ENCODE measurements at regions of chr11 and their contacts with region 1.

Region 1: GRCh38 chr11:44565211-44565952 is at the start of gene CD82:
- DNase-seq: peak; percentile 99
- H3K4me3 Mint-ChIP-seq: peak within 1 kb of the TSS; percentile 83
- H3K27ac Mint-ChIP-seq: peak within 1 kb of the TSS; percentile 93
- H3K4me1 Mint-ChIP-seq: peaks cover 51% of the 10 kb centered on the region
- H3K27me3 Mint-ChIP-seq: no peaks in the 10 kb centered on the region
- total RNA-seq, gene CD82: 140 to 141 TPM

Region 2: GRCh38 chr11:43341159-43341558 is 1224.2 kb before region 1 on chr11:
- CTCF ChIA-PET with region 1: no interaction called
- intact Hi-C with region 1: no loop called
- DNase-seq: no peak
- H3K4me3 Mint-ChIP-seq: no peak overlapping the region
- H3K27ac Mint-ChIP-seq: no peak overlapping the region
- H3K4me1 Mint-ChIP-seq: no peaks in the 10 kb centered on the region
- H3K27me3 Mint-ChIP-seq: no peaks in the 10 kb centered on the region

Region 3: GRCh38 chr11:44256673-44257291 is 308.6 kb before region 1 on chr11:
- CTCF ChIA-PET with region 1: no interaction called
- intact Hi-C with region 1: no loop called
- DNase-seq: no peak
- H3K4me3 Mint-ChIP-seq: no peak overlapping the region
- H3K27ac Mint-ChIP-seq: no peak overlapping the region
- H3K4me1 Mint-ChIP-seq: peaks cover 3% of the 10 kb centered on the region
- H3K27me3 Mint-ChIP-seq: no peaks in the 10 kb centered on the region

Region 4: GRCh38 chr11:44505581-44506054 is 59.8 kb before region 1 on chr11:
- CTCF ChIA-PET with region 1: no interaction called
- intact Hi-C with region 1: no loop called
- DNase-seq: no peak
- H3K4me3 Mint-ChIP-seq: no peak overlapping the region
- H3K27ac Mint-ChIP-seq: no peak overlapping the region
- H3K4me1 Mint-ChIP-seq: no peaks in the 10 kb centered on the region
- H3K27me3 Mint-ChIP-seq: peaks cover 3% of the 10 kb centered on the region

Region 5: DNA sequence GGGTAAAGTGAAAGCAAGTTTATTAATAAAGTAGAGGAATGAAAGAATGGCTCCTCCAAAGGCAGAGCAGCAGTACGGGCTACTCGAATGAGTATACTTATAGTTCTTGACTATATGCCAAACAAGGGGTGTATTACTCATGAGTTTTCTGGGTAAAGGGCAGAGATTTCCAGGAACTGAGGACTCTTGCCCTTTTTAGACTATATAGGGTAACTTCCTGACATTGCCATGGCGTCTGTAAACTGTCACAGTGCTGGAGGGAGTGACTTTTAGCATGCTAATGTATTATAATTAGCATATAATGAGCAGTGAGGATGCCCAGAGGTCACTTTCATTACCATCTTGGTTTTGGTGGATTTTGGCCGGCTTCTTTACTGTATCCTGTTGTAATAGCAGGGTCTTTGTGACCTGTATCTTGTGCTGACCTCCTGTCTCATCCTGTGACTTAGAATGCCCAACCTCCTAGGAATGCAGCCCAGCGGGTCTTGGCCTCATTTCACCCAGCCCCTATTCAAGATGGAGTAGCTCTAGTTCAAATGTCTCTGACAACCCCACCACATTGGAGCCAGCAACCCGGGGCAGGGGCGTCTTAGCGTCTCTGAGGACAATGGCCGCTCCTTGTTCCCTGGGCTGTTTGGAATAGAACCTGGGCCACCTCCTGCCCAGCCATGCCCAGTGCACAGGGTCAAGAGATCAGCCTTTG is 34.8 kb before region 1 on chr11:
- CTCF ChIA-PET with region 1: no interaction called
- intact Hi-C with region 1: loop called (anchors 1 kb)
- DNase-seq: peak; percentile 70
- H3K4me3 Mint-ChIP-seq: no peak overlapping the region
- H3K27ac Mint-ChIP-seq: peak overlapping the region; percentile 82
- H3K4me1 Mint-ChIP-seq: peaks cover 37% of the 10 kb centered on the region
- H3K27me3 Mint-ChIP-seq: no peaks in the 10 kb centered on the region

Region 6: GRCh38 chr11:44611687-44612434 is 46.5 kb after region 1 on chr11:
- CTCF ChIA-PET with region 1: interaction called, 366 read pairs
- intact Hi-C with region 1: loop called (anchors 1 kb)
- DNase-seq: peak; percentile 78
- H3K4me3 Mint-ChIP-seq: no peak overlapping the region
- H3K27ac Mint-ChIP-seq: peak overlapping the region; percentile 71
- H3K4me1 Mint-ChIP-seq: peaks cover 82% of the 10 kb centered on the region
- H3K27me3 Mint-ChIP-seq: no peaks in the 10 kb centered on the region

Region 7: DNA sequence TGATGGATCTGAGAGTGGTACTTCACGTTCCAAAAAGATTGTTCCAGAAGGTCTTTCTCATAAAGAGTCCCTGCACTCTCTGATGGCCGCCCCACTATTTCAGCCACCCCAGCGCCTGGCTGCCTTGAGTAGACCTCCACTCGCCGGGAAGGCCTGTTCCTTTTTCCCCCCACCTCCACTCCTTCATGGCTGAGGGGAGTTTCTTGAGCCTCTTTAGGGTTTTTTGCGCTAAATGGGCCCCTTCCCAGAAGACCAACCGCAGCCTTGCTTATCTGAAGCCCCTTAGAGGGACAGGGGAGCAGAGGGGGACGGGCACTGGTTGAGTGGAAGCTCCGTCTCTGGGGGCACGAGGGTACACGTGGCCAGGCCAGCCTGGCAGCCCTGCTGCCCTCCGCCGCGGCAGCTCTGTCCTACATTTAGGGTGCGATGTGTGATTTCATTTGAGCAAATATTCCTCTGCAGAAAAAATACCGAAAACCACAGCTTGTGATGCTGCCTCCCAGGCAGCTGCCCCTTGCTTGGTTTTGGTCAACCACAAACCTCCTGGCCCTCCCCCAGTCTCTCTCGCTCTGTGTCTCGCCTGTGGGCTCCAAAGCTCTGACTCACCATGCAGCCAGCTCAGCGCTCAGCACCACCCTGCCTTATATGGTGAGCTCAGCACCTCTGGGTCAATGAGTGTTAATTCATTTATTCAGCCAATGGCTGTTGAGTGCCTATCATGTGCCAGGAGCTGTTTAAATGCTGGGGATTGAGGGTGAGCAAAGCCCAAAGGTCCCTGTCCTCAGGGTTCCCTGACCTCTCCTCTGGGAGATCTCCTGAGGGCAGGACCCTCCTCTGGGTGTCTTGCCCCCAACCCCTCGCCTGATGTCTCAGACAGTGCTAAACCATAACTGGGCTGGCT is 296.7 kb after region 1 on chr11:
- CTCF ChIA-PET with region 1: no interaction called
- intact Hi-C with region 1: loop called (anchors 2 kb)
- DNase-seq: peak; percentile 91
- H3K4me3 Mint-ChIP-seq: no peak overlapping the region
- H3K27ac Mint-ChIP-seq: no peak overlapping the region
- H3K4me1 Mint-ChIP-seq: peaks cover 32% of the 10 kb centered on the region
- H3K27me3 Mint-ChIP-seq: no peaks in the 10 kb centered on the region

Region 8: GRCh38 chr11:45846974-45847910 is 1281.9 kb after region 1 on chr11 and contains the start of gene CRY2:
- CTCF ChIA-PET with region 1: no interaction called
- intact Hi-C with region 1: loop called (anchors 5 kb)
- DNase-seq: peak; percentile 99
- H3K4me3 Mint-ChIP-seq: peak within 1 kb of the TSS; percentile 78
- H3K27ac Mint-ChIP-seq: peak within 1 kb of the TSS; percentile 63
- H3K4me1 Mint-ChIP-seq: peaks cover 45% of the 10 kb centered on the region
- H3K27me3 Mint-ChIP-seq: no peaks in the 10 kb centered on the region
- total RNA-seq, gene CRY2: 13.9 to 16.2 TPM